Activated CD8-positive, alpha-beta T cell treated with anti-CD3 and anti-CD28 coated beads for 36 hours (primary cell): ENCODE measurements at regions of chr20 and their contacts with region 1.

Region 1: DNA sequence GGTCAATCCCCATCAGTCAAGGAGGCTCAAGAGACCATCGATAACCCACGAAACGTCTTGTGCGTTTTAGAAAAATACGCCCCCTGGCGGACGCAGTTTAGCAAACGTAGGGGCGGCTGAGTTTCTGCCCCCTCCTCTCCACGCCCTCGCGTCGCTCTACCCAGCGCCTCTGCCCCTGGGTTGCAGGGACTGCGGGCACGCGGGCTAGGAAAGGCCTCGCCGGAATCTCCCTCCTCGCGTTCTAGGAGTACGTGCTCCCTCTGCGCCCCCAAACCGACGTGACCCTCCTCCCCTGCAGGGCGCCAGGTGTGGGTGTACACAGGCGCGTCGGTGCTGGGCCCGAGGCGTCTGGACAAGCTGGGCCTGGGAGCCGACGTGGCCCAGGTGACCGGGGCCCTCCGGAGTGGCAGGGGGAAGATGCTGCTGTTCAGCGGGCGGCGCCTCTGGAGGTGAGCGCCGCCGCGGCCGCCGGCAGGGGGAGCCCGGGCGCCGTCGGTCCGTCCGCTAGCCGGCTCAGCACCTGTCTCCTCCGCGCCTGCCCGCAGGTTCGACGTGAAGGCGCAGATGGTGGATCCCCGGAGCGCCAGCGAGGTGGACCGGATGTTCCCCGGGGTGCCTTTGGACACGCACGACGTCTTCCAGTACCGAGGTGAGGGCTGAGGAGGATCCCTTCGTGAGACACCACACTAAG is 5.3 kb downstream of the MMP9 start:
- DNase-seq: peak; percentile 83
- ATAC-seq: peak; percentile 86
- H3K4me3 Mint-ChIP-seq: peak overlapping the region; percentile 44
- H3K27ac Mint-ChIP-seq: no peak overlapping the region
- H3K4me1 Mint-ChIP-seq: peaks cover 42% of the 10 kb centered on the region
- H3K27me3 Mint-ChIP-seq: peaks cover 62% of the 10 kb centered on the region
- CTCF ChIP-seq: peak; percentile 99

Region 2: GRCh38 chr20:45987108-45987780 is 26.7 kb before region 1 on chr20:
- CTCF ChIA-PET with region 1: interaction called, 82 read pairs
- POLR2A ChIA-PET with region 1: interaction called, 4 read pairs
- intact Hi-C with region 1: no loop called
- DNase-seq: peak; percentile 89
- ATAC-seq: peak; percentile 99
- H3K4me3 Mint-ChIP-seq: no peak overlapping the region
- H3K27ac Mint-ChIP-seq: no peak overlapping the region
- H3K4me1 Mint-ChIP-seq: peaks cover 3% of the 10 kb centered on the region
- H3K27me3 Mint-ChIP-seq: peaks cover 12% of the 10 kb centered on the region
- CTCF ChIP-seq: peak; percentile 88

Region 3: DNA sequence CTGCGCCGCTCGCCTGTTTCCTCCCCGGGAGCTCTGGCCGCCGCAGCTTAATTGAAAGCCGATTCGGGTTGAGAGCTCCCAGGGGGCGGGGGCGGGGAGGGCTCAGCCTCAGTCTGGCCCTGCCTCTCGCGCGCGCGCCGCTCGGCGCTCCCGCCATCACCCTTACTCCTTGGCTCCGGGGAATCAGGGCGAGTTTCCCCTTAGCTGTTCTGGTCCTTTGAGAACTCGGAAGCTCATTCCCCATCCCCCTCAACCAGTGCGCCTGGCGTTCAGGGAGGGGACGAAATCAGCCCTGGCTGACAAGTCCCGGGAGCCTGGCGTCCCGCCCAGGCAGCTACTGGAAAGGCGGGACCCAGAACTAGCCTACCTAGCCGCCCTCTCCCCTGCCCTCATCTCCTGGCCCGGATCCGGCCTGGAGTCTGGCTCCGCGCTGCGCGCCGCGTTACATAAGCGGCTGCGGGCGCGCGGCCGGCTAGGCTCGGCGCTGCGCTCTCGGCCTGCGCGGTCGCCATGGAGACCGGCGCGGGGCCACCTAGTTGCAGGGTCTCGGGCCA is 17.8 kb after region 1 on chr20:
- CTCF ChIA-PET with region 1: interaction called, 25 read pairs
- POLR2A ChIA-PET with region 1: interaction called, 3 read pairs
- intact Hi-C with region 1: no loop called
- DNase-seq: no peak
- ATAC-seq: no peak
- H3K4me3 Mint-ChIP-seq: no peak overlapping the region
- H3K27ac Mint-ChIP-seq: no peak overlapping the region
- H3K4me1 Mint-ChIP-seq: no peaks in the 10 kb centered on the region
- H3K27me3 Mint-ChIP-seq: peaks cover 52% of the 10 kb centered on the region
- CTCF ChIP-seq: no peak

Region 4: DNA sequence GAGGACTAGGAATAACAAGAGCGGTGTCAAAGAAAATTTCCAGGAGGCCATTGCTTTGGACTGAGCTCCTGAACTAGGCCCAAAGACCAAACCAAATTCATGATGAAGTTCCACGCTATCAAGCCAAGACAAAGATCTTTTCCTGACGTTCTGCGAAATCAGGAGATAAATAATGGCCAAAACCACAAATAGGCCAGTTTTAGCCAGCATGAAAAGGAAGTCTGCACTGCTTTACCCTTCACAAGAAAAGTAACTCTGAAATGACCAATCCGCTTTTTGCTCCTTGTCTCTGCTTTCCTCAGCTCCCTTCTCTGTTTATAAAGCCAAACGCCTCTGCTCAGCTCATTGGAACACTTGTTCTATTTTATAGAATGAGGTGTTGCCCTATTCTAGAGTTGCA is 69.1 kb after region 1 on chr20:
- CTCF ChIA-PET with region 1: interaction called, 19 read pairs
- POLR2A ChIA-PET with region 1: interaction called, 3 read pairs
- intact Hi-C with region 1: no loop called
- DNase-seq: no peak
- ATAC-seq: no peak
- H3K4me3 Mint-ChIP-seq: no peak overlapping the region
- H3K27ac Mint-ChIP-seq: no peak overlapping the region
- H3K4me1 Mint-ChIP-seq: peaks cover 58% of the 10 kb centered on the region
- H3K27me3 Mint-ChIP-seq: no peaks in the 10 kb centered on the region
- CTCF ChIP-seq: no peak

Region 5: DNA sequence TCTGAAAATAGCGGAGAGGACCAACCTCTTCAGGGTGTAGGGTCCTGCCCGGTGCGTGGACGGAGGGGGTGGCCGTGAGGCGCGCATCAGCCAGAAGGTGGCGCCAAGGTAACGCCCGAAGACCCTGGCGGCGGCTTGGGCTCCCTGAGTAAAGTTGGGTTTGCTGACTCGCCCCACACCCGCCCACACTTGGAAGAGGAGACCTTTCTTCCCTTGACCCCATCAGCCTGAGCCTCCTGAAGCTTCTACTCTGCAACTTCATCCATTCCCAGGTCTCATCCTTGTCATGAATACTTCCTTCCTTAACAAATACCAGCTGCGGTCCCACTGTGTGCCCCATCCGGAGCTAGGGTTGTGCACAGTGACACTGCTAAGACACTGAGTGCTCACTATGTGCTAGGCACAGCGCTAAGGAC is 118.7 kb after region 1 on chr20:
- CTCF ChIA-PET with region 1: interaction called, 11 read pairs
- POLR2A ChIA-PET with region 1: no interaction called
- intact Hi-C with region 1: no loop called
- DNase-seq: peak; percentile 77
- ATAC-seq: peak; percentile 91
- H3K4me3 Mint-ChIP-seq: no peak overlapping the region
- H3K27ac Mint-ChIP-seq: no peak overlapping the region
- H3K4me1 Mint-ChIP-seq: no peaks in the 10 kb centered on the region
- H3K27me3 Mint-ChIP-seq: peaks cover 38% of the 10 kb centered on the region
- CTCF ChIP-seq: peak; percentile 86